Heart right ventricle (tissue), 16 donors: ENCODE measurements at regions of chr16 and their contacts with region 1.

Region 1: DNA sequence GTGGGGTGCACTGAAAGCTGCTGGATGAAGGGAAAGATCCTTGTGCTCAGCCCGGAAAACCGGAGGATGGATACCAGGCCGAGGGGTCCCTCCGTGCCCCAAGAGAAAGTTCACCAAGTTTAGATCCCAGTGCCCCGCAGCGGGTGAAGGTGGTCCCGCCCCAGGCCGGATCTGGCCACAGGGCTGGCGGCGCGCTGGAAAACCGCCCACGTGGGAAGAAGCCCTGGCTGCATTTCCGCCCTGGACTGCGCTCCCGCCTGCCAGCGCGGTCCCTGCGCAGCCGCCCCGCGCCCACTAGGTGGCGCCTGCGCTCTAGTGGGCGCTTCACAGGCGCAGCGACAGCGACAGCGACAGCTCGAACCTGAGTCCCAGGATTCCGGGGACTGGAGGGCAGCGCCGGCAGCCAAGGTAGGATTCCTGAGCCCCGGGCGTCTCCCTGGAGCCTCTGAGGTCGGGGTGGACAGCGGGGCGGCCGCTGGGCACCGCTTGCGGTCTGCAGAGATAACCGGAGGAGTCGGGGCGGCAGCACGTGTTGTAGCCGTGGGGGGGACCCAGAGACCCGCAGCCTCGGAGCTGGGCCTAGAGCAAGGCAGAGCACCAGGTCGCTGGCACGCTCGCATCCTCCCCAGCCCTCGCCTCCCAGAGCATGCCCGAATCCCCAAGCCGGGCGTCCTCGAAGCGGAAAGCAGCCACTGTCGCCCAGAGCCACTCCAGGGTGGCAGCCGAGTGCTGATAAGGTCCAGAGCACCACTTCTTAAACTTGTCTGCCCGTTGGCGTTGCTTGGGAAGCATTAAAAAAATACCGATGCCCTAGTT is at the start of gene CHD9:
- DNase-seq: peak; percentile 82 to 88
- ATAC-seq: peak; percentile 92 to 97 (median 95)
- H3K4me3 ChIP-seq: peak within 1 kb of the TSS; percentile 48 to 90 (median 74)
- H3K27ac ChIP-seq: peak within 1 kb of the TSS; percentile 85 to 97 (median 94)
- H3K4me1 ChIP-seq: peaks cover 0 to 60% (median 40%) of the 10 kb centered on the region in 9 donors
- H3K27me3 ChIP-seq: no peaks in the 10 kb centered on the region
- CTCF ChIP-seq: peak; percentile 99 to 100 (median 100)
- total RNA-seq, gene CHD9: 39.6 to 58.4 (median 45.1) TPM

Region 2: GRCh38 chr16:53091466-53092211 is 36.8 kb after region 1 on chr16:
- intact Hi-C with region 1: loop called in 4 of 10 experiments (anchors 2 to 5 kb)
- DNase-seq: peak; percentile 60 to 71
- ATAC-seq: peak; percentile 24 to 59 (median 45)
- H3K4me3 ChIP-seq: peak overlapping the region in 1 of 10 donors; percentile 5
- H3K27ac ChIP-seq: peak overlapping the region; percentile 77 to 97 (median 86)
- H3K4me1 ChIP-seq: peaks cover 35 to 78% (median 64%) of the 10 kb centered on the region in 9 donors
- H3K27me3 ChIP-seq: no peaks in the 10 kb centered on the region
- CTCF ChIP-seq: no peak

Region 3: DNA sequence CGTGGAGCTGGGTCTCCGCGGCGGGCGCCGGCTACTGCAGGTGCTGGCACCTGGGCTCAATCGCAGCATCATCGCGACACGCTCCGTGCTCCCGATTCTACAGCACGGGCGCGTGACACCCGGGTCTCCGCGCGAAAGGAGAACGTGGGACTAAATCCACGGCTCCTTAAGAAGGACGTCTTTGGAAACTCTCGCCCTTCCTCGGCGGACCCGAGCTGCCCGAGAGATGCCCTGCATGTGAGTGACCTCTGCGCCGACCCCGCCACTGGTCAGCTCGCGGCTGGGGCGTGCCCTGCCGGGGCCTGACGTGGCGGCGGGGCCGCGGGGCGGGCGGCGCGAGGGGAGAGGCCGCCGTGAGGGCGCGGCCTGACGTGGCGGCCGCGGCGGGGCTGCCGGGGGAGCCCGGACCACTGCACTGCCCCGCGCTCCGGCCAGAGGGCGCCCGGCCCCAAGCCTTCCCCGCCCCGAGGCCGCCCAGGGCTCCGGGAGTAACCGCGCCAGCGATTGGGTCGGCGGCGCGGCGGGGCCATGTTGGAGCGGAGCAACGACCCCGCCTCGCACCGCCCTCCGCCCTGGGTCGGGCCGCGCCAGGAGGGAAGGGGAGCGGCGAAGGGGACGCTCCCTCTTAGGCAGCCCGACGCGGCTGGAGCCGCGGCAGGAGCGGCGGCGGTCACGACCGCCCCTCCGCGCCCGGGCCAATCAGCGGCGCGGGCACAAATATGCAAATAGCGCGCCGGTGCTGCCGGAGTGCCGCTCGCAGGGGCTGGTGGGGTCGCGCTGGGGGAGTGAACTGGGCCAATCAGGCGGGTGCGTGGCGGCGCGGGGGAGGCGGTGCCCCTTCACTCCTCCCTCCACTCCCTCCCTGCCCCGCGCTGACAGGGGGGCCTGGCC is 75.5 kb after region 1 on chr16:
- intact Hi-C with region 1: loop called in 9 of 10 experiments (anchors 1 to 10 kb)
- DNase-seq: peak; percentile 97 to 98
- ATAC-seq: peak; percentile 92 to 97 (median 95)
- H3K4me3 ChIP-seq: peak overlapping the region; percentile 68 to 94 (median 84)
- H3K27ac ChIP-seq: peak overlapping the region; percentile 89 to 99 (median 96)
- H3K4me1 ChIP-seq: peaks cover 0 to 54% (median 36%) of the 10 kb centered on the region in 9 donors
- H3K27me3 ChIP-seq: no peaks in the 10 kb centered on the region
- CTCF ChIP-seq: peak; percentile 49 to 87 (median 72)

Region 4: GRCh38 chr16:53207810-53208752 is 153.2 kb after region 1 on chr16:
- intact Hi-C with region 1: loop called in 9 of 10 experiments (anchors 2 to 10 kb)
- DNase-seq: peak in 1 of 2 donors; percentile 64
- ATAC-seq: peak; percentile 94 to 96 (median 96)
- H3K4me3 ChIP-seq: peak overlapping the region; percentile 5 to 64 (median 53)
- H3K27ac ChIP-seq: peak overlapping the region; percentile 26 to 94 (median 86)
- H3K4me1 ChIP-seq: peaks cover 0 to 65% (median 56%) of the 10 kb centered on the region in 9 donors
- H3K27me3 ChIP-seq: no peaks in the 10 kb centered on the region
- CTCF ChIP-seq: peak; percentile 14 to 80 (median 60)

Region 5: DNA sequence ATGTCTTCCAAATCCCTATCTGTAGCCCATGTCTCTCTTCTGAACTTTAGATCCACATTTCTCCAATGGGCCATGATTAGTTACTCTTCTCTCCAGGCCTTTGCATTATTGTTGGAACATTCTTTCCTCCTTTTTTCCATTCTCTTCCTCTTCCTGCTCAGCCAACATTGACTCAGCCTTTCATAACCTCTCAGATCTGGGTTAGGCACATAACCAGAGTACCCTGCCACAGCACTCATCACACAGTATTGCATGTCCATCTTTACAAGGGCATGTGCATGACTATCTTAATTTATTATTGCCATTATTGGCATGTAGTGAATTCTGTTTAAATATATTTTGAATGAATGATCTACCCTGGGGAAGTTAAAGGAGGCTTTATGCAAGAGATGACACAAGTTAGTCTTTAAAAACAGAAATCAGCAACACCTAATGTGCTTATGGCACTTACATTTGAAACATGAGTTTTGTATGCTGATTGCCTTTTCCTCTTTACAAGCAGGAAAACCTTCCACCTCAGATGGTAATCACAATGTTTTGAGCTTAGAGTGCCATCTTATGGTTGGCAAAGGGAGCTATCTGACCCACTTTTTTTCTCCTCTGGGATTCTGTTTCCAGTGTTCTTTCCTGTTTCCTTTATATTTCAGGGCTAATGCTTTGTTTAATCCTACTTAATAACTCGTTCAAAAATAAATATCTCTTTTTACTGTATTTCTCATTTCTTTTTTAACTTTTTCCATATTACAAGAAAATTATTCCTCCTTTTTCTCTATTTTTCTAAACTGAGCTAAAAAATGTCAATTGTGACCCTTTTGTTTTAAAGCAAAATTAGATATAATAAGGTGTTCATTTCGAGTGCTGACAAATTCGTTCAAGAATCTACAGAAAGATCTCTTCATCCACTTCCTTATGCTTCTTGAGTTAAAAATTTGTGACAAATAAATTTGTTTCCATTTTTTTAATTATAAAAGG is 228.4 kb after region 1 on chr16:
- intact Hi-C with region 1: loop called in 2 of 10 experiments (anchors 5 to 10 kb)
- DNase-seq: no peak
- ATAC-seq: peak in 1 of 8 donors; percentile 27
- H3K4me3 ChIP-seq: no peak overlapping the region
- H3K27ac ChIP-seq: peak overlapping the region in 1 of 10 donors; percentile 21
- H3K4me1 ChIP-seq: peaks cover 0 to 14% (median 6%) of the 10 kb centered on the region in 9 donors
- H3K27me3 ChIP-seq: no peaks in the 10 kb centered on the region
- CTCF ChIP-seq: peak in 7 of 9 donors; percentile 37 to 63 (median 53)